ENCODE measurements at regions of chr9 and their contacts with region 1.

Region 1: GRCh38 chr9:112097712-112098688 is 77.1 kb downstream of the SUSD1 start:
- DNase-seq: peak; percentile 83
- H3K4me3 Mint-ChIP-seq: no peak overlapping the region
- H3K27ac Mint-ChIP-seq: no peak overlapping the region
- H3K4me1 Mint-ChIP-seq: peaks cover 16% of the 10 kb centered on the region
- H3K27me3 Mint-ChIP-seq: no peaks in the 10 kb centered on the region

Region 2: DNA sequence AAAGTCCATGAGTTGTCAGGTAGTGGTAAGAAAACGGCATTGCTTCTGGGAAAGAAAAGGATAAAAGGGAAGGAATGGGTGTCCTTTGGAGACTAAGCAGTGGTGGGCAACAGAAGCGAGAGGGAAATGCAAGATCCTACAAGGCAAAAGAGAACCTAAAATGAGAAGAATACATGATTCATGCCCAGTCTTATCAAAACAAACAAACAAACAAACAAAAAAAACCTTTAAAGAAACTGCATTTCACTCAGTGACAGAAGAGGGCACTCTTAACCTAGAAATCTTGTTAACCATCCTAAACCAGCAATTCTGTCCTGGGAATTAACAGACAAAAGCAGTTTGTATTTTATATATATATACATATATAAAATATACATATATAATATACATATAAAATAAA is 11.4 kb before region 1 on chr9:
- CTCF ChIA-PET with region 1: interaction called, 14 read pairs
- intact Hi-C with region 1: no loop called
- DNase-seq: no peak
- H3K4me3 Mint-ChIP-seq: no peak overlapping the region
- H3K27ac Mint-ChIP-seq: no peak overlapping the region
- H3K4me1 Mint-ChIP-seq: no peaks in the 10 kb centered on the region
- H3K27me3 Mint-ChIP-seq: no peaks in the 10 kb centered on the region

Region 3: GRCh38 chr9:112119225-112120029 is 21.4 kb after region 1 on chr9:
- CTCF ChIA-PET with region 1: interaction called, 13 read pairs
- intact Hi-C with region 1: no loop called
- DNase-seq: no peak
- H3K4me3 Mint-ChIP-seq: no peak overlapping the region
- H3K27ac Mint-ChIP-seq: no peak overlapping the region
- H3K4me1 Mint-ChIP-seq: peaks cover 12% of the 10 kb centered on the region
- H3K27me3 Mint-ChIP-seq: no peaks in the 10 kb centered on the region

Region 4: GRCh38 chr9:112180387-112180881 is 82.4 kb after region 1 on chr9:
- CTCF ChIA-PET with region 1: interaction called, 4 read pairs
- intact Hi-C with region 1: loop called (anchors 2 kb)
- DNase-seq: peak; percentile 81
- H3K4me3 Mint-ChIP-seq: no peak overlapping the region
- H3K27ac Mint-ChIP-seq: peak overlapping the region; percentile 1
- H3K4me1 Mint-ChIP-seq: peaks cover 32% of the 10 kb centered on the region
- H3K27me3 Mint-ChIP-seq: peaks cover 20% of the 10 kb centered on the region

Region 5: DNA sequence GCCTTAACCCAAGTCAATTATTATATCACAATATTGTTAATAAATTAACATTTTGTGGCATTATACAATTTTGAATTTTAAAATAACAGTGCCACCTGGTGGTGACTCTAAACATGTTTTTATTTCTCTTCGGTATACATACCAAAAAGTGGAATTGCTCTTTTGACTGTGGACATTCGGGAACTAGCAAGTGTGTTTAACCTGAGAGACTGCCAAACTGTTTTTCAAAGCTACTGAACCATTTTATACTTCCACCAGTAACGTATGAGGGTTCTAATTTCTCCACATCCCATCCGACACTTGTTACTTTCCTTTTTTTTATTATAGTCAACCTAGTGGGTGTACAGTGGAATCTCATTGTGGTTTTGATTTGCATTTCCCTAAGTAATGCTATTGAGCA is 263.6 kb after region 1 on chr9:
- CTCF ChIA-PET with region 1: interaction called, 56 read pairs
- intact Hi-C with region 1: loop called (anchors 1 kb)
- DNase-seq: no peak
- H3K4me3 Mint-ChIP-seq: no peak overlapping the region
- H3K27ac Mint-ChIP-seq: no peak overlapping the region
- H3K4me1 Mint-ChIP-seq: peaks cover 12% of the 10 kb centered on the region
- H3K27me3 Mint-ChIP-seq: no peaks in the 10 kb centered on the region

Region 6: DNA sequence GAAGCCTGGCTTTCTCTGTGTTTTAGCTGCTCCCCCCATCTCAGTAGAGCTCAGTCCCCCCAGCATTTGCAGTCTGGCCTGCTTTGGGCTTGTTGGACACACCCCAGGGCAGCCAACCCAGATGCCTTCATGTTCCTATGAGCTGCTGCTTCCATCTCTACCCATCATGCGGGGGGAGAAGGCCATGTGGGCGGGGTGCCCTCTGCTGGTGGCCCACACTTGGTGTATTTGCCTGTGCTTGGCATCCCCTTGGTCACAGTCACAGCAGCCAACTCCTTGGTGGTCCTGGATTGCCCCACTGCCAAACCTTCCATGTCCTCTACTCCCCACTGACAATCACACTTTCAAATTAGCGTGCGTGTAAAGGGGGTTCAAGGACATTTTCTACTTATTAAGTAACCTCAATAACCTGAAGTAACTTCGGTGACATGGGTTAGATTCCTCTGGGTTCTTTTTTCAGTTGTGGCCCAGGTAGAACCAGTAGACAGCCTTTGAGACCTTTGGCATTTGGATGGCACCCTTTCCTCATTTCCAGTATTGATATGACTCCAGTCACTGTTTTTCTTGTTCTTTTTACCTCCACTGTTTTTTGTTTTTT is 695.3 kb after region 1 on chr9:
- CTCF ChIA-PET with region 1: interaction called, 6 read pairs
- intact Hi-C with region 1: loop called (anchors 1 kb)
- DNase-seq: peak; percentile 93
- H3K4me3 Mint-ChIP-seq: no peak overlapping the region
- H3K27ac Mint-ChIP-seq: no peak overlapping the region
- H3K4me1 Mint-ChIP-seq: peaks cover 7% of the 10 kb centered on the region
- H3K27me3 Mint-ChIP-seq: no peaks in the 10 kb centered on the region

Measured in activated naive CD4-positive, alpha-beta T cell treated with anti-CD3 and anti-CD28 coated beads for 36 hours (primary cell).